Right ventricle myocardium superior (tissue), 1 donor: ENCODE measurements at regions of chr2 and their contacts with region 1.

Region 1: GRCh38 chr2:204177977-204178540 is 241.5 kb downstream of the ICOS start:
- DNase-seq: peak; percentile 73
- ATAC-seq: peak; percentile 83

Region 2: DNA sequence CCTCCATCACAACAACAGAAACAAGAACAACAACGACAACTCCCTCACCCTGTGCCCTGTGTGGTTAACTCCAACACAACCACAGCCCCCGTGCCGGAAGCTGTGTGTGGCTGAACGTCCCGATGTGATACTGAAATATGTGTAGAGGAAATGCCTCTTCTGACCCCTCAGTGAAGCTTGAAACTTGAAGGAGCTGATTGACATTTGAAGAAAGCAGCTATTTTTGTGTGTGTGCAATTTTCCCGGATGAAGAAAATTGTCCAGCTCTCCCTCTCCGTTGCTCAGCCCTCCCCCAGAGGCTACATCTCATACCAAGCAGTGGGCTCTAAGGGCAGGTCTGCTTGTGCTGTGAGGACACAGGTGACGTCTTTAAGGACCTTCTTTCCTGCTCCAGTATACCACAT is 67.7 kb before region 1 on chr2:
- intact Hi-C with region 1: loop called (anchors 10 kb)
- DNase-seq: no peak
- ATAC-seq: no peak